Panc1 (cell line): ENCODE measurements at regions of chr20 and their contacts with region 1.

Region 1: DNA sequence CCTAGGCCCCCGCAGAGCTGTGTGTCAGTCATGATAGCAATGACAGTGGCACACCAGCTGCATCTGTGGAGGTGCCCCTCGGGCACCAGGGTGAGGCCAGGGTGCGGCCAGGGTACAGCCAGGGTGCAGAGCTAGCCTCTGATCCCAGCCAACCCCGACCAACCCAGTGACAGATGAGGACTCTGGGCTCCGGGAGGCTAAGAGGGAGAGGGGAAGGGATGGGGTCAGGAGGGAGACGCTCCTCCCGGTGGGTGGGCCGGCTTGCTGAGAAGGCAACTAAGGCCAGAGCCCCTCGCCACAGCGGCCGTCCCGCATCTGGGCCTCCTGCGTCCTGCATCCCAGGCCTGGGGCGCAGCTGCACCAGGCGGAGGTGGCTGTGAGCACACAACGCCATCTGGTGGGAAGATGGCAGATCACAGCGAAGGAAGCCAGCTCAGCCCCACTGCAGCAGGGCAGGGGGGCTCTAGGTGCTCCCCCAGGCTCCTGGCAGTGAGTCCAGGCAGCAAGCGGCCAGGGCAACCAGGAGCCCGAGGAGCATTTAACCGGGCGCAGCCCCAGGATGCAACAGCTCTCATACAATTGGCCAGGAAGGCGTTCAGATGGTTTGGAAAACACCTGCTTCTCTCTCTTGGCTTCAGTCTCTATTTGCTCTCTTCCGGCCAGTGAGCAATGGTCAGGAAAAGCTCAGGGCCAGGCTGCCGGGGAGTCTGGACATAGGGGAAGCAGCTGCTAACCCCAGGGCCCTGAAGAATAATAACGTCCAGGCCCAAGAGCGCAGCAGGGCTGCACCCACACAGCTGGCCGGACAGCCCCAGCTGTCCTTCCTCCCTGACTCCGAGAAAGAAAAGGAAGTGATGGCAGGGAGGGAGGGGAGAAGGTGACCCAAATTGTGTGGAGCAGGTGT is 169.4 kb downstream of the TAF4 start:
- DNase-seq: peak; percentile 12
- ATAC-seq: peak; percentile 89
- H3K4me3 ChIP-seq: no peak overlapping the region
- H3K27ac ChIP-seq: no peak overlapping the region
- H3K4me1 ChIP-seq: peaks cover under 1% of the 10 kb centered on the region; the same call in 1 of the 2 replicates
- H3K27me3 ChIP-seq: peaks cover 4% of the 10 kb centered on the region; the same call in 1 of the 2 replicates
- CTCF ChIP-seq: peak; percentile 95

Region 2: DNA sequence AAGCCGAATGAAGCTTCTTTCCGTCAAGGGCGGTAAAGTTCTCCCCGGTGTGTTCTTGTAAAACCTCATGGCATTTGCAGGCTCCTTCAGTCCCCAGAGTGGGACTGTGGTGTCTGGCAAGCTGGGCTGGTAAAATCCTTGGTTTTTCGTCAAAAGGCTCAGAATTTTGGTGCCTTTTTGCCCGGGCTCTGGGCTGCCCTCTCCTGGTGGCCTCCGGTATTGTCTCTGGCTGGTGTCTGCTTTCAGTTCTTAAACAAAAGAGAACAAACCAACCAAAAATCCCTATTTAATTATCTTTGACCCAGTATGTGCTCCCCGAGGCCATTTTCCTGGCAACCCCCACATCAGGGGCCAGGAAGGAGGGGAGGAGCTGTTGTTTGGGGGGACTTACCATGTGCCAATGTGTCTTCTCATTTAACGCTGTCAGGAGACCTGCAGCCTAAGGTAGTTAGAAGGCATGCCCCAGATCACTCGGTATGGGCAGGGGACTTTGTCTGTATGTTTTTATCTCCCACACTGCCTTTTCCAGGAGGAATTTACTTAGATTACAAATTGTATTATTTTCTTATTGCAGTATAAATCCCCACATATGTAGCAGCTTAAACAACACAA is 633.1 kb before region 1 on chr20:
- CTCF ChIA-PET with region 1: no interaction called
- POLR2A ChIA-PET with region 1: no interaction called
- in situ Hi-C with region 1: no loop called
- intact Hi-C with region 1: loop called (anchors 10 kb)
- DNase-seq: no peak
- ATAC-seq: no peak
- H3K4me3 ChIP-seq: no peak overlapping the region
- H3K27ac ChIP-seq: no peak overlapping the region
- H3K4me1 ChIP-seq: no peaks in the 10 kb centered on the region
- H3K27me3 ChIP-seq: peaks cover 13% of the 10 kb centered on the region; the same call in 1 of the 2 replicates
- CTCF ChIP-seq: peak; percentile 93

Region 3: GRCh38 chr20:62080249-62081025 is 184.1 kb after region 1 on chr20:
- CTCF ChIA-PET with region 1: no interaction called
- POLR2A ChIA-PET with region 1: no interaction called
- in situ Hi-C with region 1: no loop called
- intact Hi-C with region 1: no loop called
- DNase-seq: no peak
- ATAC-seq: no peak
- H3K4me3 ChIP-seq: no peak overlapping the region
- H3K27ac ChIP-seq: no peak overlapping the region
- H3K4me1 ChIP-seq: no peaks in the 10 kb centered on the region
- H3K27me3 ChIP-seq: no peaks in the 10 kb centered on the region
- CTCF ChIP-seq: no peak